ENCODE measurements at regions of chr1 and their contacts with region 1.

Region 1: GRCh38 chr1:210407207-210407886 is 78.6 kb downstream of the HHAT start:
- DNase-seq: peak; percentile 41 to 95
- H3K4me3 ChIP-seq: no peak overlapping the region
- H3K27ac ChIP-seq: no peak overlapping the region
- H3K4me1 ChIP-seq: peaks cover 0 to 6% (median 2%) of the 10 kb centered on the region in 4 experiments; a peak in 3 of 7 replicates
- H3K27me3 ChIP-seq: no peaks in the 10 kb centered on the region
- CTCF ChIP-seq: peak; percentile 79 to 85 (median 84)
- EP300 ChIP-seq: no peak
- POLR2A ChIP-seq: no peak
- RAD21 ChIP-seq: peak; percentile 93 to 94

Region 2: GRCh38 chr1:210360852-210361477 is 46.4 kb before region 1 on chr1:
- CTCF ChIA-PET with region 1: interaction called, 17 read pairs
- POLR2A ChIA-PET with region 1: no interaction called
- DNase-seq: no peak
- H3K4me3 ChIP-seq: no peak overlapping the region
- H3K27ac ChIP-seq: no peak overlapping the region
- H3K4me1 ChIP-seq: peaks cover 6 to 14% (median 12%) of the 10 kb centered on the region in 4 experiments; a peak in 5 of 7 replicates
- H3K27me3 ChIP-seq: no peaks in the 10 kb centered on the region
- CTCF ChIP-seq: peak in 2 of 3 experiments; percentile 31 to 50; a peak in 2 of 4 replicates
- EP300 ChIP-seq: no peak
- POLR2A ChIP-seq: no peak
- RAD21 ChIP-seq: peak; percentile 64 to 66

Region 3: DNA sequence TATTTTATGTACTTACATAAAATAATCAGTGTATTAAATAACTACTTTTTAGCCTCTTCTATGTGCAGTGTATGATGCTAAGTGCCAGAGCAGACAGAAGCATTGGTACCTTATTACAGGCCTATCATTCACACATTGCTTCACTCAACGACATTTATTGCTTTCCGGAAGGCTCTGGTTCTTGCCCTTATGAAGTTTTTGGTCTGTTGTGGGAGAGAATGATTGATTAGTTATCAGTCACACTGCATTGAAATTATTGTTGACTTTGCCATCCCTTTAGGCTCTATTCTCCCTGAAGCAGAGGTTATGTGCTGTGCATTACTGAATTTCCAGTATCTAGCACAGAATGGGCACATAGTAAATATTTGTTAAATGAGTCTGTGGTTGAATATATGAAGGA is 99.3 kb after region 1 on chr1:
- CTCF ChIA-PET with region 1: no interaction called
- POLR2A ChIA-PET with region 1: no interaction called
- DNase-seq: no peak
- H3K4me3 ChIP-seq: no peak overlapping the region
- H3K27ac ChIP-seq: no peak overlapping the region
- H3K4me1 ChIP-seq: no peaks in the 10 kb centered on the region
- H3K27me3 ChIP-seq: no peaks in the 10 kb centered on the region
- CTCF ChIP-seq: no peak
- EP300 ChIP-seq: no peak
- POLR2A ChIP-seq: no peak
- RAD21 ChIP-seq: no peak

Measured in H1 (cell line).